CD4-positive, alpha-beta memory T cell (primary cell): ENCODE measurements at regions of chr1 and their contacts with region 1.

Region 1: GRCh38 chr1:101357444-101357986 is 120.7 kb downstream of the S1PR1 start:
- DNase-seq: peak; percentile 78 to 87 (median 83)
- H3K4me3 ChIP-seq: no peak overlapping the region
- H3K4me3 Mint-ChIP-seq: peak overlapping the region in 4 of 8 donors; percentile 4 to 65 (median 55)
- H3K27ac ChIP-seq: no peak overlapping the region
- H3K27ac Mint-ChIP-seq: peak overlapping the region in 5 of 7 donors; percentile 67 to 96 (median 88)
- H3K4me1 ChIP-seq: peaks cover 13% of the 10 kb centered on the region
- H3K4me1 Mint-ChIP-seq: peaks cover 7 to 10% (median 10%) of the 10 kb centered on the region in 4 donors
- H3K27me3 ChIP-seq: no peaks in the 10 kb centered on the region
- H3K27me3 Mint-ChIP-seq: no peaks in the 10 kb centered on the region

Region 2: DNA sequence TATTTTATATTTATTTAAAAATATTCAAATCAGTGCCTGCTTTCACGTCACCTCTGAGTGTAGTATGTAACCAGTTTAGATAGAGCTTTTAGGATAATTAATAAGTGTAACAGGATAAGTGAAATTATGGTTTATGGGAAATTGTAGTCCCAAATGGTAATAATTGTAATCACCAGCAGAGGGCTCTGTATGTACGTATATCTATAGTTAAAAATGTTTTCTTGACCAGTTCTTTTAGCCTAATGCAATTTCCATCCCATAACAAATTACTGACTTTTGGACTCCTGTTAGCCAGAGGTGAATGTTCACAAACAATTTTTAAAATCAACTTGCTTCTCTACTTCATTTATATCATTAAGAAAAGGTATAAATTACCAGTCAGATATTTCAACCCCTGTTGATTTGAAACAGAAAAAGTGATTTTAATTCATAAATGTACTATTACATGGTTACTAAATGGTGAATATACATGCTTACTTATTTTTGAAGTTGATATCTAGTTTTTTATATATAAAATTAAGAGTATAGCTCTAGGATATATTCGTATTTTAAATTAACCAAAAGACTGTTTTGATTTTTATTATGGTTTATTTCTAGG is 436.3 kb before region 1 on chr1:
- CTCF ChIA-PET with region 1: interaction called, 15 read pairs
- POLR2A ChIA-PET with region 1: interaction called, 3 read pairs
- intact Hi-C with region 1: loop called (anchors 1 kb)
- DNase-seq: peak in 4 of 5 donors; percentile 48 to 66 (median 60)
- H3K4me3 ChIP-seq: no peak overlapping the region
- H3K4me3 Mint-ChIP-seq: peak overlapping the region in 3 of 8 donors; percentile 24 to 67 (median 39)
- H3K27ac ChIP-seq: no peak overlapping the region
- H3K27ac Mint-ChIP-seq: peak overlapping the region; percentile 61 to 91 (median 82)
- H3K4me1 ChIP-seq: peaks cover 39% of the 10 kb centered on the region
- H3K4me1 Mint-ChIP-seq: peaks cover 25 to 61% (median 38%) of the 10 kb centered on the region in 4 donors
- H3K27me3 ChIP-seq: no peaks in the 10 kb centered on the region
- H3K27me3 Mint-ChIP-seq: no peaks in the 10 kb centered on the region

Region 3: DNA sequence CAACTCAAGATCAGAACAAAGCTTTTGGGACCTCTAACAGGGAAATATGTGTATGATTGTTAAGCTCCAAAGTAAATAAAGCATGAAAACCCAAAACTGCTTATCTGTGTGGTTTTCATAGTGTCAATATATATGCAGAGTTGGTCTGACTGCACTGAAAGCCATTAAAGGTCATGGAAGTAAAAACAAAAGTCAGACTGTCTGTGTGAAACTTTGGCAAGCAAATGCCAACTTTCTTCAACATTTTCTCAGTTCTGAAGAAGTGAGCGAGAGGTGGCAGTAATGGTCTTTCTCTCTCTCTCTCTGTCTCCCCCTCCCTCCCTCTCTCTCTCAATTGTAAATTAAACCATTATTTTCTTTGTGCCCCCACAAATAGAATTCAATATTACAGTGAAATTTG is 220.8 kb before region 1 on chr1:
- CTCF ChIA-PET with region 1: interaction called, 11 read pairs
- POLR2A ChIA-PET with region 1: no interaction called
- intact Hi-C with region 1: loop called (anchors 5 kb)
- DNase-seq: peak in 3 of 5 donors; percentile 26 to 40 (median 32)
- H3K4me3 ChIP-seq: no peak overlapping the region
- H3K4me3 Mint-ChIP-seq: peak overlapping the region in 5 of 8 donors; percentile 26 to 67 (median 37)
- H3K27ac ChIP-seq: no peak overlapping the region
- H3K27ac Mint-ChIP-seq: peak overlapping the region; percentile 42 to 92 (median 77)
- H3K4me1 ChIP-seq: peaks cover 36% of the 10 kb centered on the region
- H3K4me1 Mint-ChIP-seq: peaks cover 32 to 57% (median 41%) of the 10 kb centered on the region in 4 donors
- H3K27me3 ChIP-seq: no peaks in the 10 kb centered on the region
- H3K27me3 Mint-ChIP-seq: no peaks in the 10 kb centered on the region

Region 4: GRCh38 chr1:101302831-101303511 is 54.5 kb before region 1 on chr1:
- CTCF ChIA-PET with region 1: interaction called, 262 read pairs
- POLR2A ChIA-PET with region 1: interaction called, 3 read pairs
- intact Hi-C with region 1: no loop called
- DNase-seq: no peak
- H3K4me3 ChIP-seq: no peak overlapping the region
- H3K4me3 Mint-ChIP-seq: no peak overlapping the region
- H3K27ac ChIP-seq: no peak overlapping the region
- H3K27ac Mint-ChIP-seq: no peak overlapping the region
- H3K4me1 ChIP-seq: peaks cover 28% of the 10 kb centered on the region
- H3K4me1 Mint-ChIP-seq: peaks cover 19 to 34% (median 26%) of the 10 kb centered on the region in 4 donors
- H3K27me3 ChIP-seq: no peaks in the 10 kb centered on the region
- H3K27me3 Mint-ChIP-seq: no peaks in the 10 kb centered on the region

Region 5: GRCh38 chr1:101323535-101323934 is 34.0 kb before region 1 on chr1:
- CTCF ChIA-PET with region 1: interaction called, 13 read pairs
- POLR2A ChIA-PET with region 1: interaction called, 4 read pairs
- intact Hi-C with region 1: no loop called
- DNase-seq: no peak
- H3K4me3 ChIP-seq: no peak overlapping the region
- H3K4me3 Mint-ChIP-seq: no peak overlapping the region
- H3K27ac ChIP-seq: no peak overlapping the region
- H3K27ac Mint-ChIP-seq: no peak overlapping the region
- H3K4me1 ChIP-seq: no peaks in the 10 kb centered on the region
- H3K4me1 Mint-ChIP-seq: no peaks in the 10 kb centered on the region
- H3K27me3 ChIP-seq: no peaks in the 10 kb centered on the region
- H3K27me3 Mint-ChIP-seq: peaks cover 0 to 2% of the 10 kb centered on the region in 2 donors

Region 6: GRCh38 chr1:101371259-101371658 is 13.7 kb after region 1 on chr1:
- CTCF ChIA-PET with region 1: interaction called, 15 read pairs
- POLR2A ChIA-PET with region 1: interaction called, 6 read pairs
- intact Hi-C with region 1: no loop called
- DNase-seq: peak in 2 of 5 donors; percentile 28 to 39
- H3K4me3 ChIP-seq: no peak overlapping the region
- H3K4me3 Mint-ChIP-seq: peak overlapping the region in 2 of 8 donors; percentile 26 to 38
- H3K27ac ChIP-seq: no peak overlapping the region
- H3K27ac Mint-ChIP-seq: peak overlapping the region in 3 of 7 donors; percentile 49 to 89 (median 75)
- H3K4me1 ChIP-seq: no peaks in the 10 kb centered on the region
- H3K4me1 Mint-ChIP-seq: peaks cover 0 to 12% (median 10%) of the 10 kb centered on the region in 4 donors
- H3K27me3 ChIP-seq: no peaks in the 10 kb centered on the region
- H3K27me3 Mint-ChIP-seq: no peaks in the 10 kb centered on the region

Region 7: DNA sequence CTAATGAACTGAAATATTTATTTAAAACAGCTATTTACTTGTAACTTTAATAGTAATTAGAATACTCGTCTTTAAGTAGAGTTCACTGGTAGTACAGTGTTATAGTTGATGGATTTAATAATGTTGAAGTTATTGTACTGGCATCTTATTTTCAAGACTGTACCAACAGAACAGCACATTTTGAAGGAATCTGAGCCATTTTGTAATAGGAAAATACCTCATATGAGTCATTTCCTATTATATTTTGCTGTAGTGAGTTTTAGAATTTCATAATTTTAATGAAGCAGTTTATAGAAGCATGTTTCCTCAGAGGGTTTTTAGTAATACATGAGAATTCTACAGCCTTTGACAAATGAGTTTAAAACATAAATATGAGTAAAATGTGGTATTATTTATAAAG is 381.0 kb after region 1 on chr1:
- CTCF ChIA-PET with region 1: no interaction called
- POLR2A ChIA-PET with region 1: no interaction called
- intact Hi-C with region 1: no loop called
- DNase-seq: no peak
- H3K4me3 ChIP-seq: no peak overlapping the region
- H3K4me3 Mint-ChIP-seq: no peak overlapping the region
- H3K27ac ChIP-seq: no peak overlapping the region
- H3K27ac Mint-ChIP-seq: no peak overlapping the region
- H3K4me1 ChIP-seq: no peaks in the 10 kb centered on the region
- H3K4me1 Mint-ChIP-seq: no peaks in the 10 kb centered on the region
- H3K27me3 ChIP-seq: no peaks in the 10 kb centered on the region
- H3K27me3 Mint-ChIP-seq: peaks cover 0 to 2% of the 10 kb centered on the region in 2 donors

Region 8: DNA sequence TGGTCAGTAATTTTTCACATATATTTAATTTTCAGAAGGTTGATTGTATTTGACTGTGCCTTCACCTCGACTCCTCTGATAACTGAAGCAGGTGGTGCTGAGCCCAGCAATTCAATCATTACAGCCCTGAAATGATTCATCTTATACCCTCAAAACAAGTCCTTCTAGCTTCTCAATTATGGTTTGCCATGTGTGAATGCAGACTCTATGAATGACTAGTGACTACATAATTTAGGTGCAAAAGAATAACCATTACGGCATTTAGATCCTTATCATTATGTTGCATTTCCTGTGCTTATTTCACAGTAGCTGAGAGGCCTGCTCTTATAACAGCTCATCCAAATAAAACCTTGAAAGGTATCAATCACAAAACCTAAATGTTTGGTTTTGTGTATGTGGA is 1804.8 kb after region 1 on chr1:
- CTCF ChIA-PET with region 1: no interaction called
- POLR2A ChIA-PET with region 1: no interaction called
- intact Hi-C with region 1: no loop called
- DNase-seq: no peak
- H3K4me3 ChIP-seq: no peak overlapping the region
- H3K4me3 Mint-ChIP-seq: no peak overlapping the region
- H3K27ac ChIP-seq: no peak overlapping the region
- H3K27ac Mint-ChIP-seq: no peak overlapping the region
- H3K4me1 ChIP-seq: no peaks in the 10 kb centered on the region
- H3K4me1 Mint-ChIP-seq: no peaks in the 10 kb centered on the region
- H3K27me3 ChIP-seq: no peaks in the 10 kb centered on the region
- H3K27me3 Mint-ChIP-seq: no peaks in the 10 kb centered on the region